ENCODE measurements at regions of chr7 and their contacts with region 1.

Region 1: GRCh38 chr7:15015545-15016326 is 113.2 kb upstream of the DGKB start:
- DNase-seq: peak; percentile 30
- H3K4me3 ChIP-seq: no peak overlapping the region
- H3K27ac ChIP-seq: no peak overlapping the region
- H3K4me1 ChIP-seq: no peaks in the 10 kb centered on the region
- H3K27me3 ChIP-seq: no peaks in the 10 kb centered on the region
- CTCF ChIP-seq: peak; percentile 64

Region 2: DNA sequence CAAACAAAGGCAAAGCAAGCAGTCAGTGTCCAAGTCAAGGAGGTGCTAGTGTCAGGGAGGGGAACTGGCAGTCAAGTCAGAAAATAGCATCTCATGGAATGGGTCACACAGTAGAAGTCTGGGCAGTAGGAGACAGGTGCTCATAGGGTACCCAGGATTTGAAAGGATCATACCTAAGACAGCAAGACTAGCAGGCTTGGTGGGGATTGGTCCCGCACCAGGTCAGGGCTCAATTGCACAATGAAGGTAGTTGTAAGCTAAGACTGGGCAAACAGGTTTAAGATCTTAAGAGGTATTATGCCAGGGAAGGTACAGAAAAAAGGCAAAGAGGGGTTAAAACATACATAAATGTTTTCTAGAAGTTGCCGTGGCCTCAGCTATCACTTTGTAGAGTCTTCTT is 844.9 kb before region 1 on chr7:
- intact Hi-C with region 1: no loop called
- DNase-seq: no peak
- H3K4me3 ChIP-seq: no peak overlapping the region
- H3K27ac ChIP-seq: no peak overlapping the region
- H3K4me1 ChIP-seq: no peaks in the 10 kb centered on the region
- H3K27me3 ChIP-seq: no peaks in the 10 kb centered on the region
- CTCF ChIP-seq: no peak

Region 3: GRCh38 chr7:14717816-14718215 is 297.9 kb before region 1 on chr7:
- intact Hi-C with region 1: loop called (anchors 5 kb)
- DNase-seq: no peak
- H3K4me3 ChIP-seq: no peak overlapping the region
- H3K27ac ChIP-seq: no peak overlapping the region
- H3K4me1 ChIP-seq: no peaks in the 10 kb centered on the region
- H3K27me3 ChIP-seq: no peaks in the 10 kb centered on the region
- CTCF ChIP-seq: peak; percentile 29

Region 4: GRCh38 chr7:15168489-15168888 is 152.8 kb after region 1 on chr7:
- intact Hi-C with region 1: no loop called
- DNase-seq: no peak
- H3K4me3 ChIP-seq: no peak overlapping the region
- H3K27ac ChIP-seq: no peak overlapping the region
- H3K4me1 ChIP-seq: no peaks in the 10 kb centered on the region
- H3K27me3 ChIP-seq: no peaks in the 10 kb centered on the region
- CTCF ChIP-seq: no peak